SK-N-SH (cell line): ENCODE measurements at regions of chr3 and their contacts with region 1.

Region 1: GRCh38 chr3:52897130-52898122 is at the start of gene STIMATE:
- DNase-seq: peak; percentile 97
- H3K4me3 ChIP-seq: peak within 1 kb of the TSS; percentile 83 to 95
- H3K27ac ChIP-seq: peak within 1 kb of the TSS in 1 of 2 experiments; percentile 28; a peak in 1 of 4 replicates
- H3K4me1 ChIP-seq: peaks cover 0 to 22% of the 10 kb centered on the region in 2 experiments; a peak in 2 of 4 replicates
- H3K27me3 ChIP-seq: no peaks in the 10 kb centered on the region
- CTCF ChIP-seq: no peak
- EP300 ChIP-seq: no peak
- RAD21 ChIP-seq: no peak
- polyA plus RNA-seq, gene STIMATE: 9.3 and 10.4 TPM in 2 replicates

Region 2: GRCh38 chr3:52663098-52663497 is 234.3 kb before region 1 on chr3:
- CTCF ChIA-PET with region 1: no interaction called
- POLR2A ChIA-PET with region 1: no interaction called
- DNase-seq: no peak
- H3K4me3 ChIP-seq: no peak overlapping the region
- H3K27ac ChIP-seq: no peak overlapping the region
- H3K4me1 ChIP-seq: no peaks in the 10 kb centered on the region
- H3K27me3 ChIP-seq: no peaks in the 10 kb centered on the region
- CTCF ChIP-seq: no peak
- EP300 ChIP-seq: no peak
- RAD21 ChIP-seq: no peak

Region 3: DNA sequence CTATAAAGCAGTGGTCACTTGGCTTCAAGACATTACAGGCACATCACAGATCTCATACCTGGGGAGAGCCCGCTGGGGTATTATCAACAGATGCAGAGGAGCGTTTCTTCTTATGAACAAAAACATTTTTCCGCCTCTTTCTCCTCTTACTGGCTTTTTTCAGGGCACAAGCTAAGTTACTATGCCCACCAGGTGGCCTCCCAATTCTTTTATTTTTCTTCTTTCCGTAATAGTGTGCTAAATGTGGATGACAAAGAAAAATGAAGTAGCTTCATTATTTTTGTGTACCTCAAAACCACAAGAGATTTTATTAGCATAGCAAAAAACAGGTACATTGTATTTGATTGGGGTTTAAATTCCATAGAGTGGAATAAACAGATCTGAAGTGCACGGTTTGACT is 10.1 kb after region 1 on chr3:
- CTCF ChIA-PET with region 1: interaction called, 10 read pairs
- POLR2A ChIA-PET with region 1: no interaction called
- DNase-seq: no peak
- H3K4me3 ChIP-seq: no peak overlapping the region
- H3K27ac ChIP-seq: no peak overlapping the region
- H3K4me1 ChIP-seq: peaks cover 0 to 5% of the 10 kb centered on the region in 2 experiments; a peak in 1 of 4 replicates
- H3K27me3 ChIP-seq: no peaks in the 10 kb centered on the region
- CTCF ChIP-seq: peak; percentile 26; the same call in 1 of the 2 replicates
- EP300 ChIP-seq: no peak
- RAD21 ChIP-seq: peak; percentile 52

Region 4: GRCh38 chr3:53009826-53010539 is 112.6 kb after region 1 on chr3:
- CTCF ChIA-PET with region 1: no interaction called
- POLR2A ChIA-PET with region 1: no interaction called
- DNase-seq: no peak
- H3K4me3 ChIP-seq: no peak overlapping the region
- H3K27ac ChIP-seq: no peak overlapping the region
- H3K4me1 ChIP-seq: no peaks in the 10 kb centered on the region
- H3K27me3 ChIP-seq: no peaks in the 10 kb centered on the region
- CTCF ChIP-seq: no peak
- EP300 ChIP-seq: no peak
- RAD21 ChIP-seq: no peak